GM12878 (cell line): ENCODE measurements at regions of chr3 and their contacts with region 1.

Region 1: GRCh38 chr3:138051946-138052802 is 42.2 kb downstream of the CLDN18 start:
- DNase-seq: no peak
- ATAC-seq: peak; percentile 96
- H3K4me3 ChIP-seq: no peak overlapping the region
- H3K27ac ChIP-seq: no peak overlapping the region
- H3K4me1 ChIP-seq: peaks cover 7% of the 10 kb centered on the region; the same call in 1 of the 2 replicates
- H3K27me3 ChIP-seq: no peaks in the 10 kb centered on the region
- CTCF ChIP-seq: peak; percentile 78 to 93 (median 83)
- EP300 ChIP-seq: no peak
- POLR2A ChIP-seq: no peak
- RAD21 ChIP-seq: peak; percentile 91

Region 2: DNA sequence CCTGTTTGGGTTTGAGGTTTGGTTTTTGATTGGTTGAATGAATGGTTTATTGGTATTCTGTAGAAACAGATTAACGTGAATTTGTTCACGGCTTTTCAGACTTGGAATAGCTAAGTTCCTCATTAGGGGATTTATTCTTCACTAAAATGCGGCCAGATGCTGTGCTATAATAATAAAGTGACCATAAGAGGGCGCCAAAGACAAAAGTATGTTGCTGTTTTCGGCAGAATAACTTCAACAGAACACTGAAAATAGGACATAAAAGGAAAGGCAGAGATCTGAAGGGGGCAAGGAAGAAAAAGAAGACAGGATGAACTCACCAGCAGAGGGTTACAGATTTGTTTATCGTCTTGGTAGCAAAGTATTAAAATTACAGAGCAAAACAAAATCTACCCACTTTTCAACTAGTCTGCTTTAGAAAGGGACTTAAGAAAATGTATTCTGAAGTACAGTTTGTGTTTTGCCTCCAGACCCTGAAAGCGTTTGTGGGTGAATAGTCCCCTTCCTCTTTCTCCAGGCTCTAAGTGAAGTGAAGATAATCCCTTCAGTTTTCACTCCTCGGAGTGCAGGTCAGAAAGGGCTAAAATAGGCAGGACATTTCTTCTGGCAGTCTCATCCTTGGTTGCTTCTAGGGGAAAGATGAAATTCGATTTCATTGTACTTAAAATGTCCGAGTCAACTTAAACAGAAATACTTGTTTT is 946.7 kb before region 1 on chr3:
- CTCF ChIA-PET with region 1: interaction called, 35 read pairs
- POLR2A ChIA-PET with region 1: no interaction called
- RAD21 ChIA-PET with region 1: interaction called, 22 read pairs
- SMC1A ChIA-PET with region 1: interaction called, 13 read pairs
- in situ Hi-C with region 1: loop called (anchors 5 kb)
- intact Hi-C with region 1: loop called (anchors 1 kb)
- DNase-seq: peak; percentile 19
- ATAC-seq: peak; percentile 88
- H3K4me3 ChIP-seq: no peak overlapping the region
- H3K27ac ChIP-seq: no peak overlapping the region
- H3K4me1 ChIP-seq: no peaks in the 10 kb centered on the region
- H3K27me3 ChIP-seq: no peaks in the 10 kb centered on the region; a peak in 1 of 4 replicates
- CTCF ChIP-seq: peak; percentile 51 to 76 (median 67); a peak in 5 of 6 replicates
- EP300 ChIP-seq: no peak
- POLR2A ChIP-seq: no peak
- RAD21 ChIP-seq: peak; percentile 94

Region 3: GRCh38 chr3:137709011-137709601 is 343.1 kb before region 1 on chr3:
- CTCF ChIA-PET with region 1: interaction called, 19 read pairs
- POLR2A ChIA-PET with region 1: no interaction called
- RAD21 ChIA-PET with region 1: interaction called, 18 read pairs
- SMC1A ChIA-PET with region 1: interaction called, 42 read pairs
- in situ Hi-C with region 1: loop called (anchors 10 kb)
- intact Hi-C with region 1: loop called (anchors 1 kb)
- DNase-seq: no peak
- ATAC-seq: peak; percentile 50; the same call in 1 of the 3 replicates
- H3K4me3 ChIP-seq: no peak overlapping the region
- H3K27ac ChIP-seq: no peak overlapping the region
- H3K4me1 ChIP-seq: no peaks in the 10 kb centered on the region
- H3K27me3 ChIP-seq: no peaks in the 10 kb centered on the region; a peak in 1 of 4 replicates
- CTCF ChIP-seq: peak; percentile 46 to 64 (median 51)
- EP300 ChIP-seq: no peak
- POLR2A ChIP-seq: no peak
- RAD21 ChIP-seq: peak; percentile 65

Region 4: DNA sequence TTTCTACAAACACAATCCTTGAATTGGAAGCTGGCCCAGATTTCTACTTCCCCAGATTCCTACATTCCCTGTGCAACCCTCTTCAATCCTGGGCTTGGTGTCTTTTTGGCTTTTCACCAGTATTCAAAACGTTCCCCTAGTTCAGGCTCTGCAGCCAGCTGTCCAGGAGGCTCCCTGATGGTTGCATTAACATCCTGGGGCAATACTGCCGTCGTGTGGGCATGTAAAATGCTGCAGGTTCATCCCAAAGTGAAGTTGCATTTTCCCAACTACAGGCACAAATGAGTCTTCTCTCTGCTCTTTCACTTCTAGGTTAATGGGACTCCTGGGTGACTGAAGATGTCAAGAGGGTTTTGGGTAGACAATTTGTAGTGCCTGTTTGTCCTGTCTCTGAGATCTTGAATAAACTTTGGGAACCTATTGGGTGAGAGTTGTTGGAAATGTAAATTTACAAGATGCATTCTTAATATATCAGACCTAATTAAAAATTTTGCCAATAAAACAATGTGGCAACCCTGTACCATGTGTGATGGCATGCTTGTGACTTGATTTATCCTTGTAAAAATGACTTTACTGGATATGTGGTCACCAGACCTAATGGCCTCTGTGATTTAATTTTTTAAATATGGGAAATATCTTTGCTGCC is 259.4 kb before region 1 on chr3:
- CTCF ChIA-PET with region 1: interaction called, 4 read pairs
- POLR2A ChIA-PET with region 1: no interaction called
- RAD21 ChIA-PET with region 1: no interaction called
- SMC1A ChIA-PET with region 1: interaction called, 3 read pairs
- in situ Hi-C with region 1: no loop called
- intact Hi-C with region 1: loop called (anchors 2 kb)
- DNase-seq: no peak
- ATAC-seq: 0 out of 3 replicates have a peak, but pooled peaks have one; percentile 27
- H3K4me3 ChIP-seq: no peak overlapping the region
- H3K27ac ChIP-seq: no peak overlapping the region
- H3K4me1 ChIP-seq: no peaks in the 10 kb centered on the region
- H3K27me3 ChIP-seq: no peaks in the 10 kb centered on the region; a peak in 1 of 4 replicates
- CTCF ChIP-seq: peak; percentile 42 to 74 (median 71)
- EP300 ChIP-seq: no peak
- POLR2A ChIP-seq: no peak
- RAD21 ChIP-seq: peak; percentile 84

Region 5: DNA sequence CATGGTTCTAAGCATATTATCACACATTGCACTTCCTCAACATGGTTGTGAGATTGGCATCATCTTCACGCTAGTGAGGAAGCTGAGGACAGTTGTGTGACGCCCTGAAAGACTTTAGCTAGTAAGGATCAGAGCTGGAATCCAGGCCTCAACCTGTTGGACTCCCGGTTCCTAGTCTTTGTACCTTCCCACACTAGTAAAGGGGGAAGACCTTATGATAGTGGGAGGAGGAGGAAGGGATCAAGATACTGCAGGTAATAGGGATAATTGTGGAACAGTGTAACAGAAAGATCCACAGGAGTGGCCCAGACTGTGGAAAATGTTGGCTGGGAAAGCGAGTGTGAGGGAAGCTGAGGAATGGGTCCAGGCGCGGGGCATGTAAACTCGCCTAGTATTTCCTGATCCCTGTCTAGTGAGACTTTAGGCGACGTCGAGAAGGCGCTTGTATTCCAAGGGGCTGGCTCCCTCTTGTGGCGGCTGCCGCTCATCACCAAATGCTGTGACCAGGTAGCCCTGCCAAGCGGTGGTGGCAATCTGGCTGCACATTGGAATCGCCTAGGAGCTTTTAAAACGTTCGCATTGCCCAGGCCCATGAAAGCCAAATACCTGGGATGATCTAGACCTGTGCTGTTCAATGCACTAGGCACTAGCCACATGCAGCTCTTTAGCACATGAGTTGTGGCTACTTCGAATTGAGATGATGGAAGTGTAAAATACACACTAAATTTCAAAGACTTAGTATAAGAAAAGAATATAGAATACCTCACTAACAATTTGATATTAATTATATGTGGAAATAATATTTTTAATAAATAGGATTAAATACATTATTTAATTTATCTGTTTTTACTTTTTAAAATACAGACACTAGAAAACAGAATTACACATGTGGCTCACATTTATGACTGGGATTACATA is 81.0 kb before region 1 on chr3:
- CTCF ChIA-PET with region 1: interaction called, 35 read pairs
- POLR2A ChIA-PET with region 1: no interaction called
- RAD21 ChIA-PET with region 1: interaction called, 14 read pairs
- SMC1A ChIA-PET with region 1: interaction called, 11 read pairs
- in situ Hi-C with region 1: no loop called
- intact Hi-C with region 1: loop called (anchors 1 kb)
- DNase-seq: no peak
- ATAC-seq: peak; percentile 99
- H3K4me3 ChIP-seq: no peak overlapping the region
- H3K27ac ChIP-seq: no peak overlapping the region
- H3K4me1 ChIP-seq: no peaks in the 10 kb centered on the region
- H3K27me3 ChIP-seq: no peaks in the 10 kb centered on the region
- CTCF ChIP-seq: peak; percentile 80 to 87 (median 86)
- EP300 ChIP-seq: no peak
- POLR2A ChIP-seq: no peak
- RAD21 ChIP-seq: peak; percentile 72

Region 6: DNA sequence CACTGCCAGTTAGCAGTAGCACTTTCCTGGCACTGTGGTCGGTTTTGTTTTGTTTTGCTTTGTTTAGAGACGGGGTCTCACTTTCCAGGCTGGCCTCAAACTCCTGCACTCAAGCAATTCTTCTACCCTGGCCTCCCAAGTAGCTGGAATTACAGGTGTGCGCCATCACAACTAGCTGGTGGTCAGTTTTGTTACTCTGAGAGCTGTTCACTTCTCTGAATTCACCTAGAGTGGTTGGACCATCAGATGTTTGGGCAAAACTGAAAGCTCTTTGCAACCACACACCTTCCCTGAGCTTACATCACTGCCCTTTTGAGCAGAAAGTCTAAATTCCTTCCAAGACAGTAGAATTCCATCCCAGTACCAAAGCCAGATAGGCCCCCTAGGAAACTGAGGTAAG is 19.6 kb before region 1 on chr3:
- CTCF ChIA-PET with region 1: interaction called, 52 read pairs
- POLR2A ChIA-PET with region 1: interaction called, 8 read pairs
- RAD21 ChIA-PET with region 1: interaction called, 43 read pairs
- SMC1A ChIA-PET with region 1: interaction called, 80 read pairs
- in situ Hi-C with region 1: no loop called
- intact Hi-C with region 1: no loop called
- DNase-seq: peak; percentile 42
- ATAC-seq: peak; percentile 60
- H3K4me3 ChIP-seq: no peak overlapping the region
- H3K27ac ChIP-seq: peak overlapping the region; percentile 49
- H3K4me1 ChIP-seq: peaks cover 48% of the 10 kb centered on the region
- H3K27me3 ChIP-seq: no peaks in the 10 kb centered on the region
- CTCF ChIP-seq: no peak
- EP300 ChIP-seq: no peak; a peak in 1 of 4 replicates
- POLR2A ChIP-seq: no peak
- RAD21 ChIP-seq: no peak

Region 7: DNA sequence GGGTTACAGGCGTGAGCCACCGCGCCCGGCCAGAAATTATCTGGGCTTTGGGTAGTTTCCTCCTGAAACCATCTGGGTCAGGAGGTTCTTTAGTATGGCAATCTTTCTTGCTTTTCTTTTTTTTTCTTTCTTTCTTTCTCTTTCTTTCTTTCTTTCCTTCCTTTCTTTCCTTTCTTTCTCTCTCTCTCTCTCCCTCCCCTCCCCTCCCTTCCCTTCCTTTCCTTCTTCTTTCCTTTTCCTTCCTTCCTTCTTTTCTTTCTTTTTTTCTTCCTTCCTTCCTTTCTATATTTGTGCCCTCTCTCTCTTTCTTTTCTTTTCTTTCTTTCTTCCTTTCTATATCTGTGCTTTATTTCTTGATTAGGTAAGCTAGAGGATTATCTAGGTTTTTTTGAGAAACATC is 105.6 kb after region 1 on chr3:
- CTCF ChIA-PET with region 1: no interaction called
- POLR2A ChIA-PET with region 1: no interaction called
- RAD21 ChIA-PET with region 1: no interaction called
- SMC1A ChIA-PET with region 1: no interaction called
- in situ Hi-C with region 1: no loop called
- intact Hi-C with region 1: no loop called
- DNase-seq: no peak
- ATAC-seq: no peak
- H3K4me3 ChIP-seq: no peak overlapping the region
- H3K27ac ChIP-seq: no peak overlapping the region
- H3K4me1 ChIP-seq: no peaks in the 10 kb centered on the region
- H3K27me3 ChIP-seq: no peaks in the 10 kb centered on the region
- CTCF ChIP-seq: no peak
- EP300 ChIP-seq: no peak
- POLR2A ChIP-seq: no peak
- RAD21 ChIP-seq: no peak